ENCODE measurements at regions of chr16 and their contacts with region 1.

Region 1: DNA sequence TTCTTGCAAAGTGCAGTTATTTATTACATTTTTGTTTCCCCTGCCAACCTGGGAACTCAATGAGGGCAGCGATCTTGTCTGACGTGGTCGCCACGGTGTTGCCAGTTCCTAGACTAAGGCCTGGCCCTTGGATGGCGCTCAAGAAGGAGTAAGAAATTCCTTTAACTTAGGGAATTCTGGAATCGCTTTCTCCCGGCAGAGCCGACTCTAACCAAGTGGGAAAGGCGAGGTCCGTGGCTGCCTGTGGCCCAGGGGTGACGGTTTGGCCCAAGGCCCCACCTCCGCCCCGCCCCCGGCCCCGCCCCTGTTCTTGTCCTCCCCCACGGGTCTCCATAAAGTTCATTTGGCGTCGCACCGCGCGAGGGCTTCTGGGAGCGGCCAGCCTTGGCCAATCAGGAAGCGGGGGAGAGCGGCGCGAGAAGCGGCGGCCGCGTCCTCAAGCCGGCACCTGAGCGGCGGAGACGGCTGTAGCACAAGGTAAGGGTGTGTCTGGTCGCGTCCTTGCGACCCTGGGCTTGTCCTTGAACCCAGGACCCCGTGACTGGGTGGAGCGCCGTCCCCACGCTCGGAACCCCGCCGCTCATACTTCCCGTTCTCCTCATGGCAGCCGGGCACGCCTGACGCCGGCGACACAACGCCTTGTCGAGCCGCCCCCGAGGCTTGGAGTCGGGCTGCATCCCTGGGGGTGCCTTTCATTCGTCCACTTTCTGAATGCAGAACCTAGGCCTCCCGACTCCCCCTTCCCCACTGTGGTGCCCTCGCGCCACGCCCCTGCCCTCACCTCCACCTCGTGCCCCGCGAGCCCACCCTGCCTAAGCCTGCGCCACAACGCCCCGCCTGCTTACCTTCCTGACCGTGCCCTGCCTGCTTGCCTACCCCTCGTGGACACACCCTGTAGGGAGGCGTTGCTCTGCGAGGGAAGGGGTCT is at the start of gene NUP93:
- DNase-seq: peak; percentile 76 to 90 (median 88)
- ATAC-seq: peak; percentile 99
- H3K4me3 ChIP-seq: peak within 1 kb of the TSS; percentile 82
- H3K4me3 Mint-ChIP-seq: peak within 1 kb of the TSS in 1 of 10 donors; percentile 90
- H3K27ac ChIP-seq: peak within 1 kb of the TSS; percentile 84
- H3K27ac Mint-ChIP-seq: peak within 1 kb of the TSS in 7 of 9 donors; percentile 82 to 98 (median 94)
- H3K4me1 ChIP-seq: peaks cover 22 to 23% of the 10 kb centered on the region in 2 donors
- H3K4me1 Mint-ChIP-seq: peaks cover 10 to 31% (median 26%) of the 10 kb centered on the region in 7 donors
- H3K27me3 ChIP-seq: no peaks in the 10 kb centered on the region
- H3K27me3 Mint-ChIP-seq: no peaks in the 10 kb centered on the region
- total RNA-seq, gene NUP93: 53.0 to 90.5 (median 58.3) TPM

Region 2: GRCh38 chr16:56450986-56451752 is 278.8 kb before region 1 on chr16 and contains the starts of genes NUDT21 and OGFOD1:
- CTCF ChIA-PET with region 1: no interaction called
- POLR2A ChIA-PET with region 1: no interaction called
- intact Hi-C with region 1: loop called in 1 of 2 experiments (anchors 1 kb)
- DNase-seq: peak; percentile 67 to 96 (median 93)
- ATAC-seq: peak; percentile 99
- H3K4me3 ChIP-seq: peak within 1 kb of the TSS; percentile 96
- H3K4me3 Mint-ChIP-seq: peak within 1 kb of the TSS; percentile 94 to 100 (median 97)
- H3K27ac ChIP-seq: peak within 1 kb of the TSS; percentile 92
- H3K27ac Mint-ChIP-seq: peak within 1 kb of the TSS; percentile 92 to 98 (median 93)
- H3K4me1 ChIP-seq: peaks cover 24 to 42% of the 10 kb centered on the region in 2 donors
- H3K4me1 Mint-ChIP-seq: peaks cover 50 to 77% (median 64%) of the 10 kb centered on the region in 7 donors
- H3K27me3 ChIP-seq: no peaks in the 10 kb centered on the region
- H3K27me3 Mint-ChIP-seq: no peaks in the 10 kb centered on the region
- total RNA-seq, gene NUDT21: 74.0 to 191 (median 97.5) TPM
- total RNA-seq, gene OGFOD1: 23.8 to 51.8 (median 42.1) TPM

Region 3: DNA sequence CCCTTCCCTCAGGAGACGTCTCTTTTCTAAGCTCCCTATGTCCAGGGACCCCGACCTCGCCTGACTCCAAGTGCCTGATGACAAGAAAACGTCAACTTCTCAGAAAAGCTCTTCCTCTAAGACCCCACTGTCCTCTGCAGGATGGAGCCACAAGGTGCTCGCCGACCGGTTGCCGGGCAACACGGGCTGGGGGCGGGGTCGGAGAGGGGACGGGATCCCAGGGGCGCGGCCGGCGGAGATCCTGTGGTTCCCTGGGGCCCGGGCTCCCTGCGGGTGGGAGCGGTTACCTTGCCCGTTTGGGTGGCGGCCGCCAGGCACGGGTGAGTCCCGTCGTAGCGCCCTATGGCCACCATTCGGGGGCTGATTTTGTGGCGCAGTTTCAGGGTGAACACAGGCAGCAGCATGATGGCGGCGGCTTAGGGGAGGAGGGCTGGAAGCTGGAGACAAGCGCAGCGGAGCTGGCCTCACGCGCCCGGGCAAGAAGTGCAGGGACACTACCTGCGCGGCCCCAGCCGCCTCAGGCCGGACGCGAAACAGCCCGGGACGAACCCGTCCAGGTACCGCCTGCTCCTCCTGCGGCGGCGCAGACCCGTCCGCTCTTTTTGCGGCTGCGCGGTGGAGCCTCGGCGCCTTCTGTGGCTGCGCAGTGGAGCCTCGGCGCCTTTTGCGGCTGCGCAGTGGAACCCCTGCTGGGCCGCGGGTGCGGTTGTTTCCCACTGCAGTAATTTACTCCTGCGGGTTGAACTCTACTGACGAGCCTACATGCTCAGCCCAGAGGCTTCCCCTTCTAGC is 210.3 kb before region 1 on chr16 and contains the start of gene BBS2:
- CTCF ChIA-PET with region 1: no interaction called
- POLR2A ChIA-PET with region 1: no interaction called
- intact Hi-C with region 1: loop called in 1 of 2 experiments (anchors 1 kb)
- DNase-seq: peak; percentile 84 to 93 (median 92)
- ATAC-seq: peak; percentile 89
- H3K4me3 ChIP-seq: peak within 1 kb of the TSS; percentile 99
- H3K4me3 Mint-ChIP-seq: peak within 1 kb of the TSS; percentile 82 to 91 (median 86)
- H3K27ac ChIP-seq: peak within 1 kb of the TSS; percentile 92
- H3K27ac Mint-ChIP-seq: peak within 1 kb of the TSS; percentile 60 to 95 (median 90)
- H3K4me1 ChIP-seq: peaks cover 8 to 26% of the 10 kb centered on the region in 2 donors
- H3K4me1 Mint-ChIP-seq: peaks cover 11 to 62% (median 52%) of the 10 kb centered on the region in 7 donors
- H3K27me3 ChIP-seq: no peaks in the 10 kb centered on the region
- H3K27me3 Mint-ChIP-seq: no peaks in the 10 kb centered on the region
- total RNA-seq, gene BBS2: 14.7 to 130 (median 84.0) TPM

Region 4: DNA sequence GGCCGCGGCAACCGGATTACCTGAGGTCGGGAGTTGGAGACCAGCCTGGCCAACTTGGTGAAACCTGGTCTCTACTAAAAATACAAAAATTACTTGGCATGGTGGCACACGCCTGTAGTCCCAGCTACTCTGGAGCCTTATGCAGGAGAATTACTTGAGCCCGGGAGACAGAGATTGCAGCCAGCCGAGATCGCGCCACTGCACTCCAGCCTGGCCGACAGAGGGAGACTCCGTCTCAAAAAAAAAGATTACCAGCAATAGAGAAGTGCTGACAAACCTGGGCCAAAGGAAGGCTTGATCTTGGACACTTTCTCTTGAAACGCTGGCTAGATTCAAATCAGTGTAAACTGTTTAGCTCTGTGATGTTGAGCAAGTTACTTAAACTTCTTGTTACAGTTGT is 56.1 kb before region 1 on chr16:
- CTCF ChIA-PET with region 1: no interaction called
- POLR2A ChIA-PET with region 1: no interaction called
- intact Hi-C with region 1: loop called in 1 of 2 experiments (anchors 2 kb)
- DNase-seq: peak in 5 of 9 donors; percentile 36 to 68 (median 50)
- ATAC-seq: peak; percentile 63
- H3K4me3 ChIP-seq: no peak overlapping the region
- H3K4me3 Mint-ChIP-seq: peak overlapping the region in 6 of 10 donors; percentile 1 to 65 (median 29)
- H3K27ac ChIP-seq: no peak overlapping the region
- H3K27ac Mint-ChIP-seq: peak overlapping the region in 4 of 9 donors; percentile 43 to 76 (median 50)
- H3K4me1 ChIP-seq: peaks cover 0 to 6% of the 10 kb centered on the region in 2 donors
- H3K4me1 Mint-ChIP-seq: peaks cover 7 to 39% (median 21%) of the 10 kb centered on the region in 7 donors
- H3K27me3 ChIP-seq: peaks cover 0 to 12% of the 10 kb centered on the region in 2 donors
- H3K27me3 Mint-ChIP-seq: peaks cover 27 to 60% (median 37%) of the 10 kb centered on the region in 5 donors

Region 5: GRCh38 chr16:56708525-56709442 is 21.2 kb before region 1 on chr16:
- CTCF ChIA-PET with region 1: interaction called, 5 read pairs
- POLR2A ChIA-PET with region 1: interaction called, 20 read pairs
- intact Hi-C with region 1: loop called in 1 of 2 experiments (anchors 2 kb)
- DNase-seq: peak in 6 of 9 donors; percentile 35 to 53 (median 47)
- ATAC-seq: peak; percentile 77
- H3K4me3 ChIP-seq: peak overlapping the region; percentile 65
- H3K4me3 Mint-ChIP-seq: peak overlapping the region; percentile 72 to 89 (median 83)
- H3K27ac ChIP-seq: peak overlapping the region; percentile 69
- H3K27ac Mint-ChIP-seq: peak overlapping the region; percentile 80 to 100 (median 89)
- H3K4me1 ChIP-seq: peaks cover 17 to 26% of the 10 kb centered on the region in 2 donors
- H3K4me1 Mint-ChIP-seq: peaks cover 14 to 41% (median 36%) of the 10 kb centered on the region in 7 donors
- H3K27me3 ChIP-seq: no peaks in the 10 kb centered on the region
- H3K27me3 Mint-ChIP-seq: no peaks in the 10 kb centered on the region

Measured in naive thymus-derived CD4-positive, alpha-beta T cell (primary cell).